Esophagus muscularis mucosa (tissue), 4 donors: ENCODE measurements at regions of chr6 and their contacts with region 1.

Region 1: GRCh38 chr6:139597771-139598755 is 223.6 kb upstream of the CITED2 start:
- DNase-seq: no peak
- H3K4me3 ChIP-seq: no peak overlapping the region
- H3K27ac ChIP-seq: peak overlapping the region; percentile 83 to 86 (median 83)
- H3K4me1 ChIP-seq: peaks cover 12 to 64% (median 60%) of the 10 kb centered on the region in 4 donors
- H3K27me3 ChIP-seq: no peaks in the 10 kb centered on the region
- CTCF ChIP-seq: no peak
- EP300 ChIP-seq: no peak
- POLR2A ChIP-seq: no peak

Region 2: GRCh38 chr6:139124887-139125672 is 473.0 kb before region 1 on chr6:
- intact Hi-C with region 1: no loop called
- DNase-seq: no peak
- H3K4me3 ChIP-seq: no peak overlapping the region
- H3K27ac ChIP-seq: no peak overlapping the region
- H3K4me1 ChIP-seq: peaks cover 0 to 6% (median 5%) of the 10 kb centered on the region in 4 donors
- H3K27me3 ChIP-seq: no peaks in the 10 kb centered on the region
- CTCF ChIP-seq: peak in 2 of 3 experiments; percentile 34 to 37
- EP300 ChIP-seq: no peak
- POLR2A ChIP-seq: no peak

Region 3: DNA sequence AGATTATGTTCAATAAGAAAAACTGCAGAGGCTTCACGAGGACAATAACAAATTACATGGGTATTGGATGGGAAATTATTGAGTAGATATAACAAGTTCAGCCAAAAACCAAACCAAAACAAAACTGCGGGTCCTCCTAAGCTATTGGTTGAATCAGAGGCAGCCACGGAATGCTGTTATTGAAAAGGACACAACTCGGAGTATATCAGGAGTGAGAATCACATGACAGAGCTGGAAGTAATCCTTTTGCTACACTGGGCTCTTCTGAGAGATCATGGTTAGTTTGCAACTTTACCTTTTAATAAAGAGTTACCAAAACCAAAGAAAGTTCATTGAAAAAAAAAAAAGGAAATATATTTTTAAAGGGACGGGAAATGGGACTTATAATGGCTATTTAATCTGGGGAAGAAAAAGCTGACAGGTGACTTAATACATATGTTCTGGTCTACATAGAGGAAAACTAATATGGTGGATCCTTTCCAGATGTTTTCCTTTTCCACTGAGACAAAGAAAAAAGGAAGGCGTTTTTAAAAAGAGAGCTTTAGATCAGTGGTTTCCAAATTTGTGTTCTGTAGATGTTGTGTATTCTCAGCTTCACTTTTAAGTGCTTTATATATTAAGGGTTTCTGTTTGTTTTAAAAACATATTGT is 216.7 kb before region 1 on chr6:
- intact Hi-C with region 1: no loop called
- DNase-seq: peak; percentile 7
- H3K4me3 ChIP-seq: no peak overlapping the region
- H3K27ac ChIP-seq: no peak overlapping the region
- H3K4me1 ChIP-seq: peaks cover 9 to 16% (median 10%) of the 10 kb centered on the region in 4 donors
- H3K27me3 ChIP-seq: no peaks in the 10 kb centered on the region
- CTCF ChIP-seq: no peak
- EP300 ChIP-seq: no peak
- POLR2A ChIP-seq: no peak

Region 4: DNA sequence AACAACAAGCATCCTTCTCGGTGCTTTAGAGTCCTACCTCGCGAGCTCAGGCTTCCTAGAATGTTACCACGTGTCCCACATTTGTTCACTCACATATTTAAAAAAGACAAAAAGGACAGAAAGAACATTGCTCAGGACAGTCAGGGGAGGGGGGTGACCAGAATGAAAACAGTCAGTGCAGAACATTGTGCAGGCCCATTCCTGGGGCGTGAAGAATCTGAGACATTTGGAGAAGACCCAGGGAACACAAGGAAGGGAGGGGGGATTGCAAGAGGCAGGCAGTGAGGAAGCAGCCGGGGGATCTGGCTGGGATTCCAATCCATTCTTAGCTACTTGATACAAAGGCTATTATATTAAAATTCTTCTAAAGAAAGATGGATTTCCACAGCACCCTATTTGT is 46.8 kb after region 1 on chr6:
- intact Hi-C with region 1: loop called (anchors 5 kb)
- DNase-seq: no peak
- H3K4me3 ChIP-seq: no peak overlapping the region
- H3K27ac ChIP-seq: peak overlapping the region; percentile 57 to 70 (median 64)
- H3K4me1 ChIP-seq: peaks cover 17 to 40% (median 26%) of the 10 kb centered on the region in 4 donors
- H3K27me3 ChIP-seq: no peaks in the 10 kb centered on the region
- CTCF ChIP-seq: no peak
- EP300 ChIP-seq: peak; percentile 71
- POLR2A ChIP-seq: no peak

Region 5: DNA sequence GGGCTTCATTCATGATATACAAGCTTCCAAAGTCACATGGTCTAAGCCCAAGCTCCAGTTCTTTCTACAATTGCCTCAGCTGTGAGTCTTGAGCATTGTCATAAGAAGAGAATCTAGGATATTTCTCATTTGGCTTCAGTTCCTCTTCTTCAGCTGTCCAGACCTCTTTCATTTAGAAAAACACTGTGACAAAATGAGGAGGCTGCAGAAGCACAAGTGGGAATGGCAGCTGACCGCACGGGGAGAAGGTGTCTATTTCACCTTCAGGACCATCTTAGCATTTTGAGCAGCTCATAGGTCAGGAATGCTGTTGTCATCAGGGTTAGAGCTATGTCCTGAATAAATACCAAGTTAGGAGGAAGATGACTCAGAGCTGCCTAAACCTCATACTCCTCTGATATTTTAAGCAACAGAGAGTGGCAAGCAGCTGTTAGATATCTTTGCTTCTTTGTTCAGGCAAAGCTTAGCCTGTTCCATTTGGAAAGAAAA is 166.5 kb after region 1 on chr6:
- intact Hi-C with region 1: loop called (anchors 5 kb)
- DNase-seq: no peak
- H3K4me3 ChIP-seq: no peak overlapping the region
- H3K27ac ChIP-seq: peak overlapping the region; percentile 77 to 87 (median 82)
- H3K4me1 ChIP-seq: peaks cover 25 to 40% (median 33%) of the 10 kb centered on the region in 4 donors
- H3K27me3 ChIP-seq: no peaks in the 10 kb centered on the region
- CTCF ChIP-seq: no peak
- EP300 ChIP-seq: no peak
- POLR2A ChIP-seq: no peak

Region 6: DNA sequence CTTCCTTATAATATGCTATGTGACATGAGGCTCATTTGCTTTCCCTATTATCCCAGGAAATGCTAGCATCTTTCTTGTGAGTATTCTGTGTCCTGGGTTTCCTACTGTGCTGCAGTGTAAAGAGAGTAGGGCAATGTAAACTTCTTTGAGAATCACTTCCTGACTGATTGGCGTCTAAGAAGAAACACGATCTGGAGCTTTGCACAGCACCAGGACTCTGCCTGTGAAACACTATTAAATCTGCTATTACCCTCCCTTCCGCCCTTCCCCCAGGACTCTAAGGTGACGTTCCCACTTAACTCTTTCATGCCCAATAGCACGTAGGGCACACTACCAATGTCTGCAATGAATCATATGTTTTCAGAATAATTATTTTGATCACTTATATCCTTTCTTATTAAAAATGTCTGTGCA is 383.7 kb after region 1 on chr6:
- intact Hi-C with region 1: loop called (anchors 5 kb)
- DNase-seq: no peak
- H3K4me3 ChIP-seq: no peak overlapping the region
- H3K27ac ChIP-seq: peak overlapping the region; percentile 74 to 81 (median 78)
- H3K4me1 ChIP-seq: peaks cover 33 to 64% (median 55%) of the 10 kb centered on the region in 4 donors
- H3K27me3 ChIP-seq: no peaks in the 10 kb centered on the region
- CTCF ChIP-seq: no peak
- EP300 ChIP-seq: no peak
- POLR2A ChIP-seq: no peak